ENCODE measurements at regions of chr16 and their contacts with region 1.

Region 1: GRCh38 chr16:10835281-10835931 is 16.8 kb upstream of the TVP23A start:
- DNase-seq: peak in 1 of 2 donors; percentile 17
- H3K4me3 ChIP-seq: no peak overlapping the region
- H3K27ac ChIP-seq: no peak overlapping the region
- H3K4me1 ChIP-seq: no peaks in the 10 kb centered on the region
- H3K27me3 ChIP-seq: peaks cover 0 to 4% of the 10 kb centered on the region in 2 donors
- CTCF ChIP-seq: no peak

Region 2: GRCh38 chr16:10521681-10522274 is 313.6 kb before region 1 on chr16:
- intact Hi-C with region 1: loop called (anchors 10 kb)
- DNase-seq: peak; percentile 70 to 76
- H3K4me3 ChIP-seq: no peak overlapping the region
- H3K27ac ChIP-seq: no peak overlapping the region
- H3K4me1 ChIP-seq: peaks cover 0 to 3% (median 0%) of the 10 kb centered on the region in 4 donors
- H3K27me3 ChIP-seq: no peaks in the 10 kb centered on the region
- CTCF ChIP-seq: peak; percentile 83 to 88

Region 3: DNA sequence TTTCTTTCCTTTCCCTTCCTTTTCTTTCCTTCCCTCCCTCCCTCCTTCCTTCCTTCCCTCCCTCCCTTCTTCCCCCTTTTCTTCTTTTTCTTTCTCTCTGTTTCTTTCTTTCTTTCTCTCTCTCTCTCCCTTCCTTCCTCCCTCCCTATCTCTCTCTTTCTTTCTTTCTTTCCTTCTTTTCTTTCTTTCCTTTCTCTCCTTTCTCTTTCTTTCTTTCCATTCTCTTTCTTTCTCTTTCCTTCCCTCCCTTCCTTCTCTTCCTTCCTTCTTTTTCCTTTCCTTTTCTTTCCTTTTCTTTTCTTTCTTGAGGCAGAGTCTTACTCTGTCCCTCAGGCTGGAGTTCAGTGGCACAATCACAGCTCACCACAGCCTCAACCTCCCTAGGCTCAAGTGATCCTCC is 75.9 kb after region 1 on chr16:
- intact Hi-C with region 1: loop called (anchors 5 kb)
- DNase-seq: no peak
- H3K4me3 ChIP-seq: no peak overlapping the region
- H3K27ac ChIP-seq: no peak overlapping the region
- H3K4me1 ChIP-seq: peaks cover 0 to 6% (median 2%) of the 10 kb centered on the region in 4 donors
- H3K27me3 ChIP-seq: no peaks in the 10 kb centered on the region
- CTCF ChIP-seq: no peak

Measured in tibial artery (tissue), 4 donors.